Breast epithelium (tissue), 4 donors: ENCODE measurements at regions of chr14 and their contacts with region 1.

Region 1: DNA sequence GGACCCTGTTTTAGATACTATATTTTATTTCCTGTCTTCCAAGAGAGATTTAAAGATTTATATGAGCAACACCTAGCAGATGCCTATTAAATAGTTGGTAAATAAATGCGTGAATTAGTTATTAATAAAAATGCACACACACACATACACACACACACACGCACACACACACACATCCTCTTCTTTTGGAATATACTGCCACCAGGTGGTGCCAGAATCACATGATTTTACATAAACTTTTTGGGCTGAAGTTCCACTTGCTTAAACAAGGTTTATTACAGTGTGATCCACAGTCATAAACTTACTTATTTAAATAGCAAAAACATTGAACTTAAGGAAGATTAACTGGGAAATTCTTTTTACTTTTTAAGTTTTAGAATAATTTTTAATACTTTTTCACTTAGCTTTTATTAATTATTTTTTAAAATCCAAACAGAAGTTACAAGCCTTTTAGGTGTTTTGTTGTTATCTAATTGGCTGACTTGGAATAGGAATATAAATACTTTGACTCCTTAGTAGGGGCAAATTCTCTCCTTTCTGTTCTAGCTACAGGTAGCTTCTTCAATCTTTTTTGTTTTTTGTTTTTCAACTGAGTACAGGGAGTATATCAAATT is 17.5 kb downstream of the RAD51B start:
- DNase-seq: peak in 1 of 2 donors; percentile 57
- H3K4me3 ChIP-seq: no peak overlapping the region
- H3K27ac ChIP-seq: no peak overlapping the region
- H3K4me1 ChIP-seq: no peaks in the 10 kb centered on the region
- H3K27me3 ChIP-seq: no peaks in the 10 kb centered on the region
- CTCF ChIP-seq: peak; percentile 39 to 92 (median 84)
- POLR2A ChIP-seq: no peak

Region 2: GRCh38 chr14:68482772-68483395 is 645.8 kb after region 1 on chr14:
- intact Hi-C with region 1: loop called (anchors 5 kb)
- DNase-seq: no peak
- H3K4me3 ChIP-seq: no peak overlapping the region
- H3K27ac ChIP-seq: no peak overlapping the region
- H3K4me1 ChIP-seq: no peaks in the 10 kb centered on the region
- H3K27me3 ChIP-seq: no peaks in the 10 kb centered on the region
- CTCF ChIP-seq: no peak
- POLR2A ChIP-seq: no peak

Region 3: GRCh38 chr14:69501423-69501838 is 1664.3 kb after region 1 on chr14:
- intact Hi-C with region 1: no loop called
- DNase-seq: no peak
- H3K4me3 ChIP-seq: no peak overlapping the region
- H3K27ac ChIP-seq: no peak overlapping the region
- H3K4me1 ChIP-seq: no peaks in the 10 kb centered on the region
- H3K27me3 ChIP-seq: no peaks in the 10 kb centered on the region
- CTCF ChIP-seq: no peak
- POLR2A ChIP-seq: no peak